BJ (cell line): ENCODE measurements at regions of chr1 and their contacts with region 1.

Region 1: GRCh38 chr1:38121231-38121680 is 74.7 kb upstream of the POU3F1 start:
- DNase-seq: no peak
- H3K4me3 ChIP-seq: no peak overlapping the region
- H3K27me3 ChIP-seq: peaks cover 2% of the 10 kb centered on the region; the same call in 1 of the 2 replicates
- CTCF ChIP-seq: no peak

Region 2: DNA sequence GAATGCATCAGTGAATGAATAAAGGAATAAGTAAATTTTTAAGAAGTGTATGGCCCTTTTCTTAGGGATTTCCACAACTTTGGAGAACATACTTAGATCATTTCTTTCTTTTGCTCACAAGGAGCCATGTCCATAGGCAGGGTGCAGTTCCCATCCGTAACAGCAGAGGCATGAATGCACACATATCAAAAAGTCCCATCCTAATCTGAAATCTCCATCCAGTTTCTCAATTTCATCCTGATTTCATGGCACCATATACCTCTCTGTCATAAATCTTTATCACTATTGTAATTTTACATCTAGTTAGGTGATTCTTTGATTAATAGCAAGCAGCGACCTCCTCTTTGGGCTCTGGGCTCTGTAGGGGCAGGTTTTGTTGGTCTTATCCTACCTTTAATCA is 379.1 kb after region 1 on chr1:
- CTCF ChIA-PET with region 1: no interaction called
- POLR2A ChIA-PET with region 1: interaction called, 25 read pairs
- DNase-seq: no peak
- H3K4me3 ChIP-seq: no peak overlapping the region
- H3K27me3 ChIP-seq: no peaks in the 10 kb centered on the region; the same call in 1 of the 2 replicates
- CTCF ChIP-seq: peak; percentile 19; the same call in 1 of the 2 replicates